Tibial artery (tissue), 4 donors: ENCODE measurements at regions of chr4 and their contacts with region 1.

Region 1: DNA sequence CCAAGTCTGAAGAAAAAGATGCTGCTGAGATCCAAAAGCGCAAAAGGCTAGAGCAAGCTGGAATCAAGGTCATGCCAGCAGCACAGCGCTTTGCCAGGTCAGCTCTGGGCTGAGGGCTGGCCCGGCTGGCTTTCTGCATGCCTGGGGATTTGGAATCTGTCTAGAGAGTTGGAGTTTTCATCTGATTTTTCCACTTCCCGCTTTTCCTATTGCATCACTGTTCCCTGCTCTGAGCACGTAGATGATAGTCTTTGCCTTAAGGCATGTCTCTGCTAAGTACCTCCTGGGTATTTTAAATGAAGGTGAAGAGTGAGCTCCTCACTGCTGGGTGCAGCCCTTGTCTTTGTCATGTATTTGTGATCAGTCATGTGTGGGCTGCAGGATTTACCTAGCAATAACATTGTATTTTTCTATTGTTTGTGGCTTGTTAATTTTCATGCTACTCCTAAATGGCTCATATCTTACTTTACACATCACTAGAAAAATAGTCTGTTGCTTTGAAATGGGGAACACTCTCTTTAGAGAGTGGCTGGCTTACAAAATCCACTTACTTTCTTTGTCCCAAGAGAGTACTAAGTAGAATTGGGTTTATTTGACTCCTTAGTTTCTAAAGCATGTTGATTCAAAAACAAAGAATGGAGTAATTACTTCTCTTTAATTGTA is 82.8 kb downstream of the LIMCH1 start:
- DNase-seq: peak in 1 of 2 donors; percentile 82
- H3K4me3 ChIP-seq: no peak overlapping the region
- H3K27ac ChIP-seq: peak overlapping the region; percentile 67 to 71
- H3K4me1 ChIP-seq: peaks cover 0 to 61% (median 30%) of the 10 kb centered on the region in 4 donors
- H3K27me3 ChIP-seq: no peaks in the 10 kb centered on the region
- CTCF ChIP-seq: no peak

Region 2: GRCh38 chr4:40710502-40711254 is 910.0 kb before region 1 on chr4:
- intact Hi-C with region 1: no loop called
- DNase-seq: no peak
- H3K4me3 ChIP-seq: no peak overlapping the region
- H3K27ac ChIP-seq: no peak overlapping the region
- H3K4me1 ChIP-seq: no peaks in the 10 kb centered on the region
- H3K27me3 ChIP-seq: no peaks in the 10 kb centered on the region
- CTCF ChIP-seq: no peak

Region 3: DNA sequence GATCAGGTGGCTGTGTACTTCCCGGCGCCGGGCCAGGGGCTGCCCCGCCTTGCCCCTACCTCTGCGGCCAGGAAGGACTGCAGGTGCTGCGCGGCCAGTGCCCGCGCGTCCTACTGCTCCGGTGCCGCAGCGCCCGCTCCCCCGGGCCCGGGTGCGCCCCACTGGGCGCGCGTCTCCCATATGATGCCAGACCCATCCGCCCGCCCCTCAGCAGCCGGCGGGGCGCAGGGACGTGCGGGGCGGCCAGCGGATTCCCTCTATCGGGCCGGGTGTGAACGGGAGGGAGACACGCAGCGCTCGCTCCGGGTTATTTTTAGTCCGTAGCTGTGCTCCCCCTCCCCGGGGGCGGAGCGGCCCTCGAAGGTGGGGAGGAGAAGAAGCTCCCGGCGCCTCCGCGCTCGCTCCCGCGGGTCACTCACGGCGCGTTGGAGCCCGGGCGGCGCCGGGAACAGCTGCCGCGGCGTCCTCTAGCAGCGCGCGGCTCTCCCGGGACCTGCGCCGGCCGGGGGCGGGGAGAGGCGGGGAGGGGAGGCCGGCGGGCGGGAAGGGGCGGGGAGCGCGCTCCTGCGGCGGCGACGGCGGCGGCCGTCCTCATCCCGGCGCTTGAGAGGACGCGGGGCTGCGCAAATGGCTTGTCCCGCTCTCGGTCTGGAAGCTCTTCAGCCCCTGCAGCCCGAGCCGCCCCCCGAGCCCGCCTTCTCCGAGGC is 260.4 kb before region 1 on chr4:
- intact Hi-C with region 1: loop called (anchors 5 kb)
- DNase-seq: peak; percentile 67 to 88
- H3K4me3 ChIP-seq: peak overlapping the region; percentile 86 to 90
- H3K27ac ChIP-seq: peak overlapping the region; percentile 89 to 95
- H3K4me1 ChIP-seq: peaks cover 3 to 48% (median 25%) of the 10 kb centered on the region in 4 donors
- H3K27me3 ChIP-seq: no peaks in the 10 kb centered on the region
- CTCF ChIP-seq: no peak

Region 4: DNA sequence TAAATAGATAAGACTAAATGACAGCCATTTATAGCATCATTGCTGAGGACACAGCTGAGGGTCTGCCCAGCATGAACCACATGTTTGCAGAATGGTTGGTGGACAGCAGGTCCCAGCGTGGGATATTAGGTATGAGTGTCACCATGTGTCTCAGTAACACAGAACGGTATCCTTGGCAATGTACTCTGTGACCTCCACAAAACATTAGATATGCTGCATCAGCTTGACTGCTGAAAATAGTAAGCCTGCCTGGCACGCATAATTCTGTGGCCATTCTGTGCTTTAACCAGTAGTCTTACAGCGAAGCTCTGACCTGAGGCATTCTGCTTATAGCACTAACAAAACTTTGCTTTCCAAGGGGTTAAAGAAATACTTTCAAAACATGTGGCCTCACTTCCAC is 50.8 kb before region 1 on chr4:
- intact Hi-C with region 1: loop called (anchors 5 kb)
- DNase-seq: peak; percentile 36 to 66
- H3K4me3 ChIP-seq: no peak overlapping the region
- H3K27ac ChIP-seq: peak overlapping the region; percentile 62 to 72
- H3K4me1 ChIP-seq: peaks cover 0 to 93% (median 48%) of the 10 kb centered on the region in 4 donors
- H3K27me3 ChIP-seq: no peaks in the 10 kb centered on the region
- CTCF ChIP-seq: peak; percentile 26 to 27

Region 5: GRCh38 chr4:41632481-41633073 is 11.9 kb after region 1 on chr4:
- intact Hi-C with region 1: no loop called
- DNase-seq: no peak
- H3K4me3 ChIP-seq: no peak overlapping the region
- H3K27ac ChIP-seq: peak overlapping the region; percentile 48 to 53
- H3K4me1 ChIP-seq: peaks cover 0 to 28% (median 12%) of the 10 kb centered on the region in 4 donors
- H3K27me3 ChIP-seq: no peaks in the 10 kb centered on the region
- CTCF ChIP-seq: no peak